Posterior vena cava (tissue), 2 donors: ENCODE measurements at regions of chr5 and their contacts with region 1.

Region 1: DNA sequence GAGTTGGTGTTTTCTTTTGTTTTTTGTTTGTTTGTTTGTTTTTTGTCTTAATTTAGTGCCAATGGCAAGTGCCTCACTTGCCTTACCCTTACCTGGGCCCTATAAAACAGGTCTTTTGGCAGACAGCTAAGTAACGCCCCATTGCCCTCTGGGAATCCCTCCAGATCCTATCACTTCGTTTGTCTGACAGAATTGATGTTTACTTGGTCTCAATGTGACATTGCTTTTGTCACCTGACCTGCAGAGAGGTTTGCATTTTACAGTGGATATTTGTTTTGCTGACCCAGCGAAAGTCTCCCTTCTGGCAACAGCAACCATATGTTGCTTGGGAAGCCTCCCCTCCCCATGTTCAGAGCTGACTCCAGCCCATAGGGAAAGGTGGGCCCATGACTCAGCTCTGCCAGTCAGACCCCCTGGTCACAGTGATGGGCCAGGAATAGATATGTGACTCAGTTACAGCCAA is 54.0 kb upstream of the LARP1 start:
- DNase-seq: no peak

Region 2: DNA sequence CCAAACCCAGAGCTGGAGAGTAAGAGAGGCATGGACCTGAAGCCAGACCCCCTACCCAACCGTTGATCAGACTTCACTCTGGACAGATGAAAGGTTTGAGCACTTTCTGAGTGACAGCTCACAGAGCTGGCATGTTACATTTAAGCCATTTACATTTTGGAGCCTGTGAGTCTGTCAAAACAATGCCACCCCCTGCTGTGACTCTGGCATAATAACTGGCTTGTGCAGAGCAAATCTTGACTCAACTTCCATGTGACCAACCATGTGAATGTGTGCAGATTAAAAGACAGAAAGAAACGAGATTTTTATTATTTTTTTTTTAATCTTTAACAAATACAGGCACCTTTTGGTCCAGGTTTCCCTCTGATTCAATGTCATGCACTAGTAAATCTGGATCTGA is 613.9 kb before region 1 on chr5:
- intact Hi-C with region 1: no loop called
- DNase-seq: no peak

Region 3: GRCh38 chr5:154627698-154628678 is 73.2 kb before region 1 on chr5:
- intact Hi-C with region 1: loop called in 1 of 2 experiments (anchors 2 kb)
- DNase-seq: no peak

Region 4: DNA sequence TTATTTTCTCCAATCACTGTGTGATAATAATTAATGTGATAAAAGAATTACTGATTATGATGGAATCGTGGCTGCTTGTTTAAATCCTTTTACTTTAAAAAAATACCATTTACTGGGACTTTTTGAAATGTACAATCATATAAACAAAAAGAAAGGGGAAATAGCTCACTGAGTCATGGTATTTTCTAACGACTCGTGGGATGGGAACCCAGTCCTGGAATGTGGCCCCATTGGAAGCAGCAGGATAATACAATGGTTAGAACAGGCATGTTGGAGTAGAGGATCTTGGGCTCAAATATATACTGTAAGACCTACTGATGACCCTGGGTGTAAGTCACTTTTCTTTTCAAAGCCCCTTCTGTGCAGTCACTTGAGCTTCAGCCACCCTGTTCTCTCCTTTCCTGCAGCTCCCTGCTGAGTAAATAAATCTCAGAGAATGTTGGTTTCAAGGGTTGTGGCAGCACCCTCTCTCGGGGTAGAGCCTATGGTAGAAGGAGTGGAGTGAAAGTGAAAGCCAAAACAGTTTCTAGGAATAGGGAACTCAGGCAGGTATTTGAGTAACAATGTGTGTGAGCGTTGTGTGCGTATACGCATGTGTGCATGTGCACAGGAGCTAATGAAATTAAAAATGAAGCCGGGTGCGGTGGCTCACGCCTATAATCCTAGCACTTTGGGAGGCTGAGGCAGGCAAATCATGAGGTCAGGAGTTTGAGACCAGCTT is 13.3 kb after region 1 on chr5:
- intact Hi-C with region 1: no loop called
- DNase-seq: no peak